ENCODE measurements at regions of chr12 and their contacts with region 1.

Region 1: DNA sequence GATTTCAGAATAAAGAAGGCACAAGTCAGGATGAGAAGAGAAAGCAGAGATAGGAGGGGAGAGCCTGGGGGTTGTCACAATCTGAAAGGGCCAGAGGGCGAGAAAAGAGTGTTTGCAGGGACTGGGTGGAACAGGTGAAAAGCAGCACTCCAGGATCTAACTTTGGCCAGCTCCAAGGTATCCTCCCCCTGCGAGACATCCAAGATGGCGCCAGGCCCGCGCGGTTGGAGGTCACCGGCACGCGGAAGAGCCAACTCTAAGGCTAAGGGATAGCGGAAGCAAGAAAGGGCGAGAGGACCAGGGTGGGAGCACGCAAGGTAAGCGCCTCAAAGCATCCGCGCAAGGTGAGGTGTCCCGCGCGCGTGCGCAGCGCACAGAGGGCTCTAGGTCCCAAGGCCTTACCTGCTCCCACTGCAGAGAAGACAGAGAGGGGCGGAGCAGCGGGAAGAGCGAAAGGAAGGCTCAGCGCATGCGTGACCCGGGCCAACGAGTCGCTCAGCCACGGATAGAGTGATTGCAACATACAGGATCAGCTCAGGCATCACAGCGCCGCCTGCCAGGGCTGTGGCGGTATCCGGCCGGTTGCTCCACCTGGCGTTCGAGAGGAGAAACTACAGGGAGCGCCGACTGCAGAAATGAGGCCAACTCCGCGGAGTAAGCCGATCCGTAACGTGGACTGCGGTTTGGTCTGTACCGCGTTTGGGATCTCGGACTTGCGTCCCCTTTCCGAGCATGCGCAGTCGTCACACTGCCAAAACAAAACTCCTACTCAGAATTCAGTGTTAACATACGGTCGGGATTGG is at the start of gene ATP5MC2:
- DNase-seq: peak; percentile 95
- H3K4me3 Mint-ChIP-seq: peak within 1 kb of the TSS; percentile 87
- H3K27ac Mint-ChIP-seq: peak within 1 kb of the TSS; percentile 95
- H3K4me1 Mint-ChIP-seq: peaks cover 22% of the 10 kb centered on the region
- H3K27me3 Mint-ChIP-seq: peaks cover 27% of the 10 kb centered on the region
- total RNA-seq, gene ATP5MC2: 363 and 383 TPM in 2 replicates

Region 2: DNA sequence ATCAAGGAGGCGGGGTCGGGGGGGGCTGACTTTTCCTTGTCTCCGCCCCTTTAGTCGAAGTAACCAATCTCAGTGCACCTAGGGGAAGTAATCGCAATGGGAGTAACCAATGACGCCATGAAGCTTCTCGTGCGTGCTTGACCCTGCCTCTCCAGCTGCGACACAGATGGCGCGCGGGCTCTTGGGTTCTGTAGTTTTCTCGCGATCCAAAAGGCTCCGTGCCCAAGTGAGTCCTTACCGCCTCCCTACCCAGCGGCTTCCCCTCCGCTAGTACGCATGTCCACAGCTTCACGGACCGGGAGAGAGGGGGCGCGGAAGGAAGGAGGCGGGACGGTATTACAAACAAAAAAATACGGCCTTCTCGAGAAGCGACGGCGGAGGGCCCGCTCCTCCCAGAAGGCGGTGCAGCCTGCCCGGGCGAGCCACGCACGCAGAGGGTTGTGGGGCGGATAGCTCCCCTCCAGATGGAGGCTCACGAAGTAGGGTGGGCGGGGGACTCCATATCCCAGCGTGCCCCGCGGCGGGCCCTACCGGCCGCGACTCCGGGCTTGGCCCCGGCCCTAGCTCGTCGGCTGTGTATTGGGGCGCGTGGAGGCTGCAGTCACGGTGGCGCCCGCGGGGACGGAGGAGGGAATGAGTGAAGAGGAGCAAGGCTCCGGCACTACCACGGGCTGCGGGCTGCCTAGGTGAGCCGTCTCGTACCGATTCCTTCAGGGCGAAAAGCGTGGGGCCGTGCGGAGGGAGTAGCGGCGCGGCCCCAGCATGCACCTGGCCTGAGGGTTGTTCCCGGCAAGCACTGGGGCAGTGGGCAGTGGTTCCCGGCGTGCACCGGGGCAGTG is 174.9 kb before region 1 on chr12 and contains the start of gene TARBP2:
- intact Hi-C with region 1: loop called (anchors 1 kb)
- DNase-seq: peak; percentile 93
- H3K4me3 Mint-ChIP-seq: peak within 1 kb of the TSS; percentile 95
- H3K27ac Mint-ChIP-seq: peak within 1 kb of the TSS; percentile 98
- H3K4me1 Mint-ChIP-seq: peaks cover 53% of the 10 kb centered on the region
- H3K27me3 Mint-ChIP-seq: peaks cover 2% of the 10 kb centered on the region
- total RNA-seq, gene TARBP2: 47.7 and 48.2 TPM in 2 replicates

Region 3: GRCh38 chr12:53543539-53543938 is 132.3 kb before region 1 on chr12:
- intact Hi-C with region 1: loop called (anchors 1 kb)
- DNase-seq: peak; percentile 38
- H3K4me3 Mint-ChIP-seq: no peak overlapping the region
- H3K27ac Mint-ChIP-seq: peak overlapping the region; percentile 75
- H3K4me1 Mint-ChIP-seq: peaks cover 13% of the 10 kb centered on the region
- H3K27me3 Mint-ChIP-seq: no peaks in the 10 kb centered on the region

Region 4: DNA sequence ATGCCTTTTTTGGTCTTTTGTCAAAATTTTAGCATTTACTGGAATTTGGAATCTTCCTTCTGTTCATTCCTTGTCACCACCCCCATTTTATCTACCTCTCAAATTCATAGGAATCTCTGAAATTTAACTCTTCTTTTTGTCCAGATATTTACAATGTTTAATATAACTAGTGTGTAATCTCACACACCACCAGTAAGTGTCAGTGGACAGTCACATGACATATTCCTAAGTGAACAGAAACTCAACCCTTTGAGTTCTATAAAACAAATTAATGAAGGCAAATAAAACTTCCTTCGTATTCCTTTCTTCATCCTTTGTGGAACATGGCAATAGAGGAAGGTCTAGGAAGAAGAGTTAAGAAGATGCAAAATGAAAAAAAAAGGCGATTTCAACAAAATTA is 76.3 kb before region 1 on chr12:
- intact Hi-C with region 1: loop called (anchors 1 kb)
- DNase-seq: no peak
- H3K4me3 Mint-ChIP-seq: no peak overlapping the region
- H3K27ac Mint-ChIP-seq: no peak overlapping the region
- H3K4me1 Mint-ChIP-seq: peaks cover 15% of the 10 kb centered on the region
- H3K27me3 Mint-ChIP-seq: no peaks in the 10 kb centered on the region

Region 5: GRCh38 chr12:53625946-53626701 is 49.7 kb before region 1 on chr12 and contains the start of gene ATF7:
- intact Hi-C with region 1: loop called (anchors 1 kb)
- DNase-seq: peak; percentile 98
- H3K4me3 Mint-ChIP-seq: peak within 1 kb of the TSS; percentile 99
- H3K27ac Mint-ChIP-seq: peak within 1 kb of the TSS; percentile 89
- H3K4me1 Mint-ChIP-seq: peaks cover 36% of the 10 kb centered on the region
- H3K27me3 Mint-ChIP-seq: no peaks in the 10 kb centered on the region
- total RNA-seq, gene ATF7: 21.5 and 25.9 TPM in 2 replicates

Region 6: GRCh38 chr12:53696285-53696654 is 20.4 kb after region 1 on chr12:
- intact Hi-C with region 1: loop called (anchors 1 kb)
- DNase-seq: no peak
- H3K4me3 Mint-ChIP-seq: no peak overlapping the region
- H3K27ac Mint-ChIP-seq: no peak overlapping the region
- H3K4me1 Mint-ChIP-seq: peaks cover 23% of the 10 kb centered on the region
- H3K27me3 Mint-ChIP-seq: peaks cover 88% of the 10 kb centered on the region

Region 7: DNA sequence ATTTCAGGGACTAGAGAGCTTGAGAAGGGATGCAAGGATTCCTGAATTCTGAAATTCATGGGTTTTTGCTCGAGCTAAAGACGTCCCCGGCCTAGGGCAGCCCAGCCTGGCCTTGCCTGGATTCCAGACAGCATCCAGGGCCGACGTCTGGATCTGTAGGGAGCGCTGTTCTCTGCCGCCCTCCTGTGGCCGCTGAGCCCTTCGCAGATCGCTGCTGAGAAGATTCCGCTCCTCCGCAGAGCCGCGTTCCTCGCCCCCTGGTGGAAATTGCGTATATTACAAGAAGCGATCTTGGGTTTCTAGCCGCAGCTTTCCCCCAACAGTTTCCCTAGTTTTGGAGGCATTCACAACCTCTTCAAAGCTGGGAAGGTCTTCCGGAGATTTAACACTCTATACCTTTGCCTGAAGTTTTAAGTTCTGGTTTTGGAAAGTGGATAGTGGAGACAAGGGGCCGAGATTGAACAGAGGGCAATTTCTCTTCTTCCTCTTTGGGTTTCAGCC is 70.8 kb after region 1 on chr12:
- intact Hi-C with region 1: loop called (anchors 1 kb)
- DNase-seq: peak; percentile 78
- H3K4me3 Mint-ChIP-seq: no peak overlapping the region
- H3K27ac Mint-ChIP-seq: no peak overlapping the region
- H3K4me1 Mint-ChIP-seq: peaks cover 12% of the 10 kb centered on the region
- H3K27me3 Mint-ChIP-seq: peaks cover 40% of the 10 kb centered on the region

Measured in activated T-helper 1 cell treated with anti-CD3 and anti-CD28 coated beads, Interleukin-12 subunit alpha, Interleukin-12 subunit beta, Interleukin-2, Interleukin-4 antibody, amounts not matched to agents 30 ng/mL and 10 ng/mL and 1 ng/mL, durations not matched to agents 14 hours and 24 hours and 36 hours (primary cell).